ENCODE measurements at regions of chr2 and their contacts with region 1.

Region 1: GRCh38 chr2:27303093-27304025 is 4.9 kb downstream of the UCN start:
- H3K4me3 ChIP-seq: no peak overlapping the region
- H3K27ac ChIP-seq: no peak overlapping the region
- H3K4me1 ChIP-seq: no peaks in the 10 kb centered on the region
- CTCF ChIP-seq: peak; percentile 69; the same call in 1 of the 2 replicates

Region 2: GRCh38 chr2:27249891-27250651 is 53.3 kb before region 1 on chr2:
- CTCF ChIA-PET with region 1: interaction called, 61 read pairs
- POLR2A ChIA-PET with region 1: no interaction called
- H3K4me3 ChIP-seq: no peak overlapping the region
- H3K27ac ChIP-seq: no peak overlapping the region
- H3K4me1 ChIP-seq: 0 out of 2 replicates have a peak, but pooled peaks cover 4% of the 10 kb centered on the region
- CTCF ChIP-seq: peak; percentile 79

Region 3: GRCh38 chr2:27264753-27265535 is 38.4 kb before region 1 on chr2:
- CTCF ChIA-PET with region 1: interaction called, 27 read pairs
- POLR2A ChIA-PET with region 1: no interaction called
- H3K4me3 ChIP-seq: peak overlapping the region; percentile 25
- H3K27ac ChIP-seq: no peak overlapping the region; the same call in 1 of the 2 replicates
- H3K4me1 ChIP-seq: peaks cover 9% of the 10 kb centered on the region
- CTCF ChIP-seq: peak; percentile 98

Region 4: GRCh38 chr2:27291865-27292264 is 11.5 kb before region 1 on chr2:
- CTCF ChIA-PET with region 1: interaction called, 51 read pairs
- POLR2A ChIA-PET with region 1: interaction called, 10 read pairs
- H3K4me3 ChIP-seq: no peak overlapping the region
- H3K27ac ChIP-seq: no peak overlapping the region
- H3K4me1 ChIP-seq: peaks cover 13% of the 10 kb centered on the region
- CTCF ChIP-seq: no peak

Measured in HEK293 (cell line).